ENCODE measurements at regions of chr12 and their contacts with region 1.

Region 1: GRCh38 chr12:45170456-45171042 is 45.3 kb upstream of the ANO6 start:
- DNase-seq: no peak
- H3K4me3 ChIP-seq: no peak overlapping the region
- H3K27me3 ChIP-seq: no peaks in the 10 kb centered on the region
- CTCF ChIP-seq: peak; percentile 92

Region 2: DNA sequence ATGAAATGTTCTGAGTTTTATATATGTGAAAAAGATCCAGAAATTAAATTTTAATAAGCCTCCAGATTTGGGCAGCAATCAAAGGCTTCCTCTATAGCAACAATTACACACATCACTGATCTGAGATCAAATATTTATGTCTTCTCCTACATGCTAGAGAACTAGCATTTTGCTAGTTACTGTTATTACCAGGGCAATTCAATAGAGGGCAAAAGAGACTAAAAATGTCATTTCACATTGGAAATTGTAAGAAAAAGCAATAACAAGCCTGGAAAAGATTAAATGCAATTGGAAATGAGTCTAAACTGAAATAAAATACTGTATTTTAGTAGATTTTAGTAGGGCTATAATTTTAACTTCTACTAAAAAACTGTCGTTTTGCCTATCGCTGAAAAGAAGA is 12.7 kb after region 1 on chr12:
- CTCF ChIA-PET with region 1: interaction called, 15 read pairs
- POLR2A ChIA-PET with region 1: no interaction called
- DNase-seq: no peak
- H3K4me3 ChIP-seq: no peak overlapping the region
- H3K27me3 ChIP-seq: no peaks in the 10 kb centered on the region
- CTCF ChIP-seq: peak; percentile 53

Region 3: DNA sequence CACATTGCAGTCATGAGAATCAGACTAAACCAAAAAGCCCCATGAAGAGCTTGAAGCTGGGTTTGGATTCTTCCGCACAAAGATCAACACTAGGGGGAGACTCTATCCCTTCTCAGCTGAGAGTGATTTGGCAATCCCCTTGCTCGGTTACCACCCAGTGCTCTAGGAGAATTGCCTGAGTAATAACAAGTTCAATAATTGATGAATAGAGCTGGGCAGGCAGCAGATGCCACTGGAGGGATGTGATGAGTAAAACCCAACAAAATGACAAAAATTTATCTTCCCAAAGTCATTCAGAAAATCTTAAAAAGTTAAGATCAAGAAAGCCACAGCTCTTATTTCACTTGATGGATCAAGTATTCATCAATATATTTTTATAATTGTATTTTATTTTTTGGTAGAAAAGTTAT is 373.4 kb after region 1 on chr12:
- CTCF ChIA-PET with region 1: interaction called, 11 read pairs
- POLR2A ChIA-PET with region 1: no interaction called
- DNase-seq: peak; percentile 18
- H3K4me3 ChIP-seq: no peak overlapping the region
- H3K27me3 ChIP-seq: peaks cover 5% of the 10 kb centered on the region
- CTCF ChIP-seq: peak; percentile 86